Kidney (tissue), 22 donors: ENCODE measurements at regions of chr22 and their contacts with region 1.

Region 1: DNA sequence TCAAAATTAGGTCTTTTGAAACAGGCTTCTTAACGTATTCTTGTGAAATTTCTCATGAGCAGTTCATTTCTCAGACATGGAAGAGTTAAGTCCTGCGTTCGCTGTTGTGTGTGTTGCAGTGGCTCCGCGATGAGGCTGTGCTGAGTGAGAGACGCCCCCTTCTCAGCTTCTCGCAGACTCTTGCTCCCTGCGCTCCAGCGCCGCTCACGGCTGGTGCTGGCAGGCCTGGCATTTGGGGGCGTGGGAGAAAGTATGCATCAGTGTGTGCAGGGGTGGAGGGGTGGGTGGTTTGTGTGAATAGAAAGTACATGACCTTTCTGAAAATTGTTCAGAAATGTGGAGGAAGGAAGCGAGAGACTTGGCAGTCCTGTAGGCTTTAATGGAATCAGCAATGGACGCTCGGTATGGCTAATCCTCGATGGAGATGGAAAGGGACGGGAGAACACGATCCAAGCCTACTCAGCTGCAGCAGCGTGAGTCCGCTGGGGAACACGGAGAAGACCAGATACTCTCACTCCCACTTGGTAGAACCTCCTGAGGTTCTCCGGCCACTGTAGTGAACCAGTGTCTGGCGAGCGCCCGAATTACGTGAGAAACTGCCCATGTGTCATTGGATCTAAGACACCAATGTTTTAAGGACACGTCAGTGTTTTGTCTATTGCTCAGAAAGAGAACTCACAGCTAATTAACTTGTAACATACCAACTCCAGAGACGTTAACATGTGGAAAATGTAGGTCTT is 5.9 kb downstream of the TAB1 start:
- DNase-seq: peak; percentile 63 to 83 (median 68)
- H3K4me3 ChIP-seq: no peak overlapping the region
- H3K27ac ChIP-seq: no peak overlapping the region
- H3K4me1 ChIP-seq: peaks cover under 1 to 4% (median 3%) of the 10 kb centered on the region in 3 donors
- H3K27me3 ChIP-seq: no peaks in the 10 kb centered on the region
- CTCF ChIP-seq: no peak

Region 2: GRCh38 chr22:39215426-39216120 is 189.9 kb before region 1 on chr22:
- intact Hi-C with region 1: no loop called
- DNase-seq: peak in 1 of 5 donors; percentile 57
- H3K4me3 ChIP-seq: no peak overlapping the region
- H3K27ac ChIP-seq: no peak overlapping the region
- H3K4me1 ChIP-seq: no peaks in the 10 kb centered on the region
- H3K27me3 ChIP-seq: no peaks in the 10 kb centered on the region
- CTCF ChIP-seq: peak; percentile 21

Region 3: DNA sequence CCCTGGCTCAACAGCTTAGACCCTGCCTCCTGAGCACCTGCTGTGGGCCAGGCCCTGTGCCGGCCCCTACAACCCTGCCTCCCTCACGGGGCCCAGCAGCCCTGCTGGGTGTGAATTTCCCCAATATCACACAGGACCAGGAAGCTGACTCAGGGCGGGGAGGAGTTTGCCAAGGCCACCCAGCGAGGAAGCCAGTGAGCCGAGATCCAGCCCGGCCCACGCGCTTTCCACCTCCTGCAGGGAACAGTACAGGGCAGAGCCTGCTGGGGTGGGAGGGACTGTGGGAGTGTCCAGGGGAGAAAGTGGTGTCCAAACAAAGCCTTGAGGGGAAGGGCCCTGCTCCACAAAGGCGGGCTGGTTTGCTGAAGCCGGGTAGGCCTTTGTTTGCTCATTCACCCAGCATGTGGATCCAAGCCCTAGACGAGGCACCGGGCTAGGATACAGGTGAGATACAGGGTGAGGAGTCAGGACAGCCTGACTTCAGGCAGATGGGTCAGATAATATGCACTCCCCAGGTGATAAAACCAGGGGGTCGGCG is 112.9 kb before region 1 on chr22:
- intact Hi-C with region 1: no loop called
- DNase-seq: peak; percentile 84 to 97 (median 91)
- H3K4me3 ChIP-seq: no peak overlapping the region
- H3K27ac ChIP-seq: peak overlapping the region; percentile 71 to 95
- H3K4me1 ChIP-seq: peaks cover 0 to 42% (median 40%) of the 10 kb centered on the region in 3 donors
- H3K27me3 ChIP-seq: no peaks in the 10 kb centered on the region
- CTCF ChIP-seq: no peak

Region 4: DNA sequence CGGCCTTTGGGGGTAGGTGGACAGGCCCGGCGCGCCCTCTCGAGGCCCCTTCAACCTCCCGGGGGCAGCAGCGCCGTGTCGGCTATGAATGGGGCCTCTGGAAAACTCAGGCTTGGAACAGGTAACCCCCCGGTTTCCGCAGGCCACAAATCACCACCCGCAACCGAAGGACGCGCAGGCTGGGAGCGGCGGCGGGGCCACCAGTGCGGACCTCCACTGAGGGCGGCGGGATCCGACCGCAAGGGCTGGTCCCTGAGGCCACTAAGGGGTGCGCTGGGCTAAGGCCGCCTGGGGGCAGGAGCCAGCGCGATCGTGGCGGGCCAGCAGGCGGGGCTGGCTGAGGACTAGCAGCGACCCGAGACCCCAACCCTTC is 114.2 kb after region 1 on chr22:
- intact Hi-C with region 1: loop called (anchors 10 kb)
- DNase-seq: peak in 3 of 5 donors; percentile 79 to 89 (median 82)
- H3K4me3 ChIP-seq: peak overlapping the region; percentile 87 to 97 (median 94)
- H3K27ac ChIP-seq: peak overlapping the region; percentile 100
- H3K4me1 ChIP-seq: peaks cover 5 to 38% (median 26%) of the 10 kb centered on the region in 3 donors
- H3K27me3 ChIP-seq: no peaks in the 10 kb centered on the region
- CTCF ChIP-seq: no peak